Esophagus muscularis mucosa (tissue), 4 donors: ENCODE measurements at regions of chr15 and their contacts with region 1.

Region 1: GRCh38 chr15:40421246-40422157 is 15.9 kb downstream of the IVD start:
- DNase-seq: no peak
- H3K4me3 ChIP-seq: peak overlapping the region in 1 of 4 donors; percentile 25
- H3K27ac ChIP-seq: no peak overlapping the region
- H3K4me1 ChIP-seq: peaks cover 19 to 23% (median 22%) of the 10 kb centered on the region in 4 donors
- H3K27me3 ChIP-seq: no peaks in the 10 kb centered on the region
- CTCF ChIP-seq: peak; percentile 91 to 96 (median 95)
- EP300 ChIP-seq: no peak
- POLR2A ChIP-seq: no peak

Region 2: DNA sequence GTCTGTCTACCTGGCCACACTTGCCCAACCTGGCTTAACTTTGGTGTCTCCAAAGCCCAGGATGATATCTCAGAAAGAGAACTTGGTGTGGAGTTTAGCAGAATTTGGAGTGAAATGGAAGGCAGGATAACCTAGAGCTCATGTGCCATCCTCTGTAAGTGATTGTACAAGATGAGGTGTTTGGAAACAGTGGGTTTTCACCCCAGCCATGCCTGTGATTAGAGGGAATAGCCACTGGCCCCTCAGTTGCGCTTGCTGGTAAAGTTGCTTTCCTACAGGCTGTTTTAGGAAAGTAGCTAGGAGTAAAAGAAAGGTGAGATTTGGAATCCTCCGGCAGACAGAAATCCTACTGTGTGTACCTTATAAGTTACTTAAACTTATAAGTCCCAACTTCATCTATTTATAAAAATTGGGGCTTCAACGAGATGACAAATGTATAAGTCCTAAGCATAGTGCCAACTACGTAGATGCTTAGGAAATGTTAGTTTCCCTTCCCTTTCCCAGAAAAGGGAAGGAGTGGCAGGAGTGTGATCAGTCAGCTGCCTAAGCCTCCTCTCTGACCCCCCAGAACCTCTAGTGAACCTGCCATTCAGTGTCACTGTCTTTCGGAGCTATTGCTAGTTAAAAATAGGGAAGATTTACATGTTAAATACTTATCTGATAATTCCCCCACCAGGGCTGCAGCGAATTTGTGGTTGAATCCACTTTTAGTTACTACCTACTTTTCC is 299.4 kb before region 1 on chr15:
- intact Hi-C with region 1: no loop called
- DNase-seq: no peak
- H3K4me3 ChIP-seq: no peak overlapping the region
- H3K27ac ChIP-seq: no peak overlapping the region
- H3K4me1 ChIP-seq: no peaks in the 10 kb centered on the region
- H3K27me3 ChIP-seq: no peaks in the 10 kb centered on the region
- CTCF ChIP-seq: no peak
- EP300 ChIP-seq: no peak
- POLR2A ChIP-seq: no peak

Region 3: GRCh38 chr15:40226736-40227135 is 194.8 kb before region 1 on chr15:
- intact Hi-C with region 1: loop called (anchors 10 kb)
- DNase-seq: no peak
- H3K4me3 ChIP-seq: no peak overlapping the region
- H3K27ac ChIP-seq: no peak overlapping the region
- H3K4me1 ChIP-seq: no peaks in the 10 kb centered on the region
- H3K27me3 ChIP-seq: no peaks in the 10 kb centered on the region
- CTCF ChIP-seq: no peak
- EP300 ChIP-seq: no peak
- POLR2A ChIP-seq: no peak

Region 4: GRCh38 chr15:40274350-40275274 is 146.9 kb before region 1 on chr15:
- intact Hi-C with region 1: loop called (anchors 1 kb)
- DNase-seq: peak; percentile 96
- H3K4me3 ChIP-seq: no peak overlapping the region
- H3K27ac ChIP-seq: no peak overlapping the region
- H3K4me1 ChIP-seq: peaks cover 4 to 7% (median 5%) of the 10 kb centered on the region in 4 donors
- H3K27me3 ChIP-seq: peaks cover 0 to 27% (median 3%) of the 10 kb centered on the region in 4 donors
- CTCF ChIP-seq: peak in 2 of 3 experiments; percentile 100
- EP300 ChIP-seq: no peak
- POLR2A ChIP-seq: no peak

Region 5: DNA sequence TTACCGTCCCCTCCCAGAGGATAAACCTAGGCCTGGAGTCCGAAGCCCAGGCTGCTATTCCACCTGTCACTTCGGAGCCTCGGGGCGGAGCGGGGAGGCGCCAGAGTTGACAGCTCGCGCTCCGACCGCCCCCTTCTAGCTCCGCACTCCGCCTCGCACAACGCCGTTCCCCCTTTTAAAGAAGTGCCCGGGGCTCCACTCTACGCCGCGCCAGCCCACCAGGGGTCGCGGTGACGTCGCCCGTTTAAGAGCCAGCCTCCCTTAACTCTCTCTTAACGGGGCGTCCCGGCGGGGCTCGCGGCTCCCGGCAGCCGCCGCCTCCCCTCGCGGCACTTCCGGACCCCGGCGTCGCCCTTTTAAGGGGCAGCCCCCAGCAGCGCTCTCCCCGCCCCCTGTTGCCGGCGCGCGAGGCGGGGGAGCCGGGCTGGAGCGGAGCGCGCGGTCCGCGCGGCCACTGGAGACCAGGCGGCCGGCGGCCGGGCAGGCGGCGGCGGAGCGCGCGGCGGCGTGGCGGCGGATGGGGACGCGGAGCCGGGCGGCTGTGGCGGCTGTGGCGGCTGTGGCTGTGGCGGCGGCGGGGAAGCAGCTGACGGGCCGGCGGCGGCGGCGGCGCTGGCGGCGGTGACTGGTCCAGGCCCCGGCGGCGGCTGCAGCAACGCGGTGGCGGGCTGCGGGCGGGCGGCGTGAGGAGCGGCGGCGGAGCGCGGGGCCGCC is 98.1 kb before region 1 on chr15 and contains the start of gene INAFM2:
- intact Hi-C with region 1: loop called (anchors 2 kb)
- DNase-seq: peak; percentile 97
- H3K4me3 ChIP-seq: peak within 1 kb of the TSS; percentile 86 to 95 (median 95)
- H3K27ac ChIP-seq: peak within 1 kb of the TSS; percentile 92 to 98 (median 96)
- H3K4me1 ChIP-seq: peaks cover 40 to 71% (median 64%) of the 10 kb centered on the region in 4 donors
- H3K27me3 ChIP-seq: no peaks in the 10 kb centered on the region
- CTCF ChIP-seq: peak; percentile 60 to 77 (median 72)
- EP300 ChIP-seq: no peak
- POLR2A ChIP-seq: no peak
- total RNA-seq, gene INAFM2: 39.0 to 41.3 (median 40.7) TPM

Region 6: GRCh38 chr15:40343512-40343911 is 78.0 kb before region 1 on chr15:
- intact Hi-C with region 1: no loop called
- DNase-seq: no peak
- H3K4me3 ChIP-seq: no peak overlapping the region
- H3K27ac ChIP-seq: peak overlapping the region; percentile 96 to 98 (median 98)
- H3K4me1 ChIP-seq: peaks cover 63 to 66% (median 64%) of the 10 kb centered on the region in 4 donors
- H3K27me3 ChIP-seq: no peaks in the 10 kb centered on the region
- CTCF ChIP-seq: no peak
- EP300 ChIP-seq: no peak
- POLR2A ChIP-seq: no peak

Region 7: DNA sequence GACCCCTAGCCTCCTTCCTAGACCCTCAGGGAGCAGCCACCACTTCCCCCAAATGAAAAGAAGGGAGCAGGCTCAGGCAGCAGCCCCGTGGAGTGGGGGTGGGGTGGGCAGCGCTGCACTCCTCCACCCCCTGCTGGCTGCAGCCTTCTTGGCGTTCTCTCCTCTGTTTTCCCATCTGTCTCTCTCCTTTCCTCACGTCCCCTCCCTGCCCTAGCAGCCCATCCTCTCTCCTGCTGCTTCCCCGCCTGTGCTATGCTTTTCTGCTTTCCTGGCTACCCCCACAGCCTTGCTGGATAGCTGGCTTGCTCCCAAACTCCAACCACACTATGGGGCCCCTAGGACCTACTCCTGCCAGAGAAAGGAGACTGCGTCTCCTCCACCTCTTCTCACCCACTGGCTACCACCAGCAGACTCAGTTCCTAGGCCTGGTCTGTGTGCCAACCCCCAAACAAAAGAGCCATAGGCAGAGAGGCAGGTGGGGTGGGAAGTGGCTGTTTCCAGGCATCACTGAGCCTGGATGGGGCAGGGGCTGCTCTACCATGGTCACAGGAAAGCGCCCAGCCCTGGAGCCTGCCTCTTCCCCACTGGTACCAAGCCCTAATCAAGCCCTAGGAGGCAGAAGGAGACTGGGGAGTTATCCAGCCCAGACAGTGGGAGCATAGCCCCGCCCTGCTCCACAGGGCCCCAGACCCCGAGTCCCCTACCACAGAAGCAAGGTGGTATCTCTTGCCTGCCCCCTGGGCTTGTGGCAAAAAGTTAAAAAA is 66.9 kb before region 1 on chr15:
- intact Hi-C with region 1: loop called (anchors 5 kb)
- DNase-seq: no peak
- H3K4me3 ChIP-seq: no peak overlapping the region
- H3K27ac ChIP-seq: no peak overlapping the region
- H3K4me1 ChIP-seq: peaks cover 15 to 29% (median 28%) of the 10 kb centered on the region in 4 donors
- H3K27me3 ChIP-seq: peaks cover 0 to 12% (median 0%) of the 10 kb centered on the region in 4 donors
- CTCF ChIP-seq: peak; percentile 42 to 50 (median 42)
- EP300 ChIP-seq: no peak
- POLR2A ChIP-seq: no peak

Region 8: DNA sequence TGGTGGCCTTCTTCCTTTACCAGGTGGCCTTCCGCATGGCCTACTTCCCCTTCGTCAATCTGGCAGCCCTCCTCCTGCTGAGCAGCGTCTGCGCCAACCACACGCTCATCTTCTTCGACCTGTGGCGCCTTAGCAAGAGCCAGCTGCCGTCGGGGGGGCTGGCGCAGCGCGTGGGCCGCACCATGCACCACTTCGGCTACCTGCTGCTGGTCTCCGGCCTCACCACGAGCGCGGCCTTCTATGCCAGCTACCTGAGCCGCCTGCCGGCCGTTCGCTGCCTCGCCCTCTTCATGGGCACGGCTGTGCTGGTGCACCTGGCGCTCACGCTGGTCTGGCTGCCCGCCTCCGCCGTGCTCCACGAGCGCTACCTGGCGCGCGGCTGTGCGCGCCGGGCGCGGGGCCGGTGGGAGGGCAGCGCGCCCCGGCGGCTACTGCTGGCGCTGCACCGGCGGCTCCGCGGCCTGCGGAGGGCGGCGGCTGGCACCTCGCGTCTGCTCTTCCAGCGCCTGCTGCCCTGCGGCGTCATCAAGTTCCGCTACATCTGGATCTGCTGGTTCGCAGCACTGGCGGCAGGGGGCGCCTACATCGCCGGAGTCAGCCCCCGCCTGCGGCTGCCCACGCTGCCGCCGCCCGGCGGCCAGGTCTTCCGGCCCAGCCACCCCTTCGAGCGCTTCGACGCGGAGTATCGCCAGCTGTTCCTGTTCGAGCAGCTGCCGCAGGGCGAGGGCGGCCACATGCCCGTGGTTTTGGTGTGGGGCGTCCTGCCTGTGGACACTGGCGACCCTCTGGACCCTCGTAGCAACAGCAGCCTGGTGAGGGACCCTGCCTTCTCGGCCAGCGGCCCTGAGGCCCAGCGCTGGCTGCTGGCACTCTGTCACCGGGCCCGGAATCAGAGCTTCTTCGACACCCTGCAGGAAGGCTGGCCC is 53.6 kb before region 1 on chr15:
- intact Hi-C with region 1: loop called (anchors 1 kb)
- DNase-seq: no peak
- H3K4me3 ChIP-seq: peak overlapping the region; percentile 44 to 54 (median 50)
- H3K27ac ChIP-seq: peak overlapping the region in 2 of 4 donors; percentile 28 to 48
- H3K4me1 ChIP-seq: peaks cover 19 to 25% (median 21%) of the 10 kb centered on the region in 4 donors
- H3K27me3 ChIP-seq: no peaks in the 10 kb centered on the region
- CTCF ChIP-seq: peak; percentile 88 to 94 (median 94)
- EP300 ChIP-seq: no peak
- POLR2A ChIP-seq: no peak

Region 9: GRCh38 chr15:40506964-40507571 is 85.6 kb after region 1 on chr15:
- intact Hi-C with region 1: no loop called
- DNase-seq: no peak
- H3K4me3 ChIP-seq: peak overlapping the region; percentile 42 to 53 (median 42)
- H3K27ac ChIP-seq: peak overlapping the region in 1 of 4 donors; percentile 17
- H3K4me1 ChIP-seq: peaks cover 3 to 25% (median 22%) of the 10 kb centered on the region in 4 donors
- H3K27me3 ChIP-seq: no peaks in the 10 kb centered on the region
- CTCF ChIP-seq: peak; percentile 67 to 81 (median 70)
- EP300 ChIP-seq: no peak
- POLR2A ChIP-seq: no peak